Aorta (tissue), 5 donors: ENCODE measurements at regions of chr11 and their contacts with region 1.

Region 1: GRCh38 chr11:67353317-67354074 is at the start of gene POLD4:
- DNase-seq: peak; percentile 99 to 100
- ATAC-seq: peak; percentile 93
- H3K4me3 ChIP-seq: peak within 1 kb of the TSS; percentile 36 to 37
- H3K27ac ChIP-seq: peak within 1 kb of the TSS; percentile 67 to 92
- H3K4me1 ChIP-seq: peaks cover 6 to 10% of the 10 kb centered on the region in 2 donors
- H3K27me3 ChIP-seq: no peaks in the 10 kb centered on the region
- total RNA-seq, gene POLD4: 82.7 to 85.1 TPM

Region 2: GRCh38 chr11:67126986-67127385 is 226.5 kb before region 1 on chr11:
- intact Hi-C with region 1: no loop called
- DNase-seq: no peak
- ATAC-seq: no peak
- H3K4me3 ChIP-seq: no peak overlapping the region
- H3K27ac ChIP-seq: no peak overlapping the region
- H3K4me1 ChIP-seq: no peaks in the 10 kb centered on the region
- H3K27me3 ChIP-seq: no peaks in the 10 kb centered on the region

Region 3: DNA sequence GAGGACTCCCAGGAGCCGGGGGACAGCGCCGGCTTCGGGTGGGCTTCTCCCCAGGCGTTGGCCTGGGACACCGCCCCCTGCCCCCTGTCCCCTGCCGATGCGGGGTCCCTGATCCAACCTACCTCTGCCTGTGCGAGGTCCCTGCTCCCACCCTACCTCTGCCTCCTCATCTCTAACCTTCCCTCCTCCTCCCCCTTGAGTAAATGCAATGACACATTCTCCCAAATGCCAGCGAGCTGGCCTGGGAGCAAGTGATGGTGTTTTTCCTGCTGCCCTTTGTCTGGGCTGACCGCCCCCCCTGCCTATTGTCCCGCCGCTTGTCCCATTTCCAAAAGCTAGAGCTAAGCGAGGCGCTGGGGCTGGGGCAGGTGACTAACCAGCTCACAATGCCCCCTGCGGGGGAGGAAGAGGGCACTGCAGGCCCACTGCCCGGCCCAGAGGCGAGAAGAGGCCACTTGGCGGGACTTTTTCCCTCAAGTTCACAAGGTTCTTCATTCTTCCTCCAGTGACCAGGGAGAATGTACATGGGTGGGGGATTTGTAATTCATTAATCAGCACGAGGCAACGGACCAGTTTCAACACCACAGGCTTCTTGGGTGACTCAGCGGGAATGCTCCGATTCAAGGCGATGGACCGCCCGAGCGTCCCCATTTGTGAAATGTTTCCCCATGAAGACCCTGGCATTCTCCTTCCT is 20.6 kb after region 1 on chr11:
- intact Hi-C with region 1: loop called in 1 of 2 experiments (anchors 2 kb)
- DNase-seq: peak; percentile 91 to 96
- ATAC-seq: peak; percentile 76
- H3K4me3 ChIP-seq: peak overlapping the region; percentile 71 to 88
- H3K27ac ChIP-seq: peak overlapping the region; percentile 15 to 25
- H3K4me1 ChIP-seq: no peaks in the 10 kb centered on the region
- H3K27me3 ChIP-seq: no peaks in the 10 kb centered on the region